Activated CD4-positive, alpha-beta memory T cell treated with anti-CD3 and anti-CD28 coated beads for 36 hours (primary cell): ENCODE measurements at regions of chr22 and their contacts with region 1.

Region 1: GRCh38 chr22:43993027-43993760 is 30.9 kb upstream of the PARVB start:
- DNase-seq: peak; percentile 70
- H3K4me3 Mint-ChIP-seq: no peak overlapping the region
- H3K27ac Mint-ChIP-seq: no peak overlapping the region
- H3K4me1 Mint-ChIP-seq: peaks cover 21% of the 10 kb centered on the region
- H3K27me3 Mint-ChIP-seq: no peaks in the 10 kb centered on the region

Region 2: GRCh38 chr22:43876866-43877509 is 116.2 kb before region 1 on chr22:
- CTCF ChIA-PET with region 1: no interaction called
- POLR2A ChIA-PET with region 1: no interaction called
- intact Hi-C with region 1: no loop called
- DNase-seq: no peak
- H3K4me3 Mint-ChIP-seq: no peak overlapping the region
- H3K27ac Mint-ChIP-seq: no peak overlapping the region
- H3K4me1 Mint-ChIP-seq: no peaks in the 10 kb centered on the region
- H3K27me3 Mint-ChIP-seq: peaks cover 27% of the 10 kb centered on the region

Region 3: GRCh38 chr22:43945632-43946383 is 47.4 kb before region 1 on chr22:
- CTCF ChIA-PET with region 1: interaction called, 10 read pairs
- POLR2A ChIA-PET with region 1: no interaction called
- intact Hi-C with region 1: no loop called
- DNase-seq: peak; percentile 80
- H3K4me3 Mint-ChIP-seq: no peak overlapping the region
- H3K27ac Mint-ChIP-seq: no peak overlapping the region
- H3K4me1 Mint-ChIP-seq: no peaks in the 10 kb centered on the region
- H3K27me3 Mint-ChIP-seq: peaks cover 4% of the 10 kb centered on the region

Region 4: GRCh38 chr22:44026630-44027511 is 33.7 kb after region 1 on chr22:
- CTCF ChIA-PET with region 1: interaction called, 14 read pairs
- POLR2A ChIA-PET with region 1: interaction called, 3 read pairs
- intact Hi-C with region 1: loop called (anchors 2 kb)
- DNase-seq: peak; percentile 88
- H3K4me3 Mint-ChIP-seq: peak overlapping the region; percentile 74
- H3K27ac Mint-ChIP-seq: peak overlapping the region; percentile 98
- H3K4me1 Mint-ChIP-seq: peaks cover 60% of the 10 kb centered on the region
- H3K27me3 Mint-ChIP-seq: peaks cover 4% of the 10 kb centered on the region

Region 5: GRCh38 chr22:44063462-44064371 is 70.5 kb after region 1 on chr22:
- CTCF ChIA-PET with region 1: no interaction called
- POLR2A ChIA-PET with region 1: no interaction called
- intact Hi-C with region 1: no loop called
- DNase-seq: no peak
- H3K4me3 Mint-ChIP-seq: no peak overlapping the region
- H3K27ac Mint-ChIP-seq: no peak overlapping the region
- H3K4me1 Mint-ChIP-seq: peaks cover 12% of the 10 kb centered on the region
- H3K27me3 Mint-ChIP-seq: peaks cover under 1% of the 10 kb centered on the region

Region 6: GRCh38 chr22:44180706-44181032 is 187.5 kb after region 1 on chr22 and contains the start of gene PARVG:
- CTCF ChIA-PET with region 1: interaction called, 7 read pairs
- POLR2A ChIA-PET with region 1: no interaction called
- intact Hi-C with region 1: loop called (anchors 5 kb)
- DNase-seq: peak; percentile 44
- H3K4me3 Mint-ChIP-seq: peak within 1 kb of the TSS; percentile 86
- H3K27ac Mint-ChIP-seq: peak within 1 kb of the TSS; percentile 89
- H3K4me1 Mint-ChIP-seq: peaks cover 23% of the 10 kb centered on the region
- H3K27me3 Mint-ChIP-seq: no peaks in the 10 kb centered on the region
- total RNA-seq, gene PARVG: 58.5 to 59.5 TPM

Region 7: GRCh38 chr22:44625981-44626687 is 632.9 kb after region 1 on chr22:
- CTCF ChIA-PET with region 1: interaction called, 85 read pairs
- POLR2A ChIA-PET with region 1: no interaction called
- intact Hi-C with region 1: loop called (anchors 1 kb)
- DNase-seq: peak; percentile 85
- H3K4me3 Mint-ChIP-seq: no peak overlapping the region
- H3K27ac Mint-ChIP-seq: no peak overlapping the region
- H3K4me1 Mint-ChIP-seq: peaks cover 2% of the 10 kb centered on the region
- H3K27me3 Mint-ChIP-seq: peaks cover 4% of the 10 kb centered on the region